Naive thymus-derived CD4-positive, alpha-beta T cell (primary cell): ENCODE measurements at regions of chr2 and their contacts with region 1.

Region 1: GRCh38 chr2:237603718-237604362 is 13.3 kb upstream of the RAB17 start:
- DNase-seq: peak; percentile 39 to 91 (median 84)
- ATAC-seq: peak; percentile 98
- H3K4me3 ChIP-seq: peak overlapping the region; percentile 38
- H3K4me3 Mint-ChIP-seq: peak overlapping the region; percentile 64 to 85 (median 73)
- H3K27ac ChIP-seq: peak overlapping the region; percentile 88
- H3K27ac Mint-ChIP-seq: peak overlapping the region; percentile 93 to 99 (median 97)
- H3K4me1 ChIP-seq: peaks cover 8 to 23% of the 10 kb centered on the region in 2 donors
- H3K4me1 Mint-ChIP-seq: peaks cover 18 to 42% (median 37%) of the 10 kb centered on the region in 7 donors
- H3K27me3 ChIP-seq: no peaks in the 10 kb centered on the region
- H3K27me3 Mint-ChIP-seq: peaks cover 0 to 11% (median 0%) of the 10 kb centered on the region in 5 donors

Region 2: GRCh38 chr2:237627441-237628246 is 23.8 kb after region 1 on chr2 and contains the start of gene LRRFIP1:
- CTCF ChIA-PET with region 1: no interaction called
- POLR2A ChIA-PET with region 1: interaction called, 6 read pairs
- intact Hi-C with region 1: loop called in 1 of 2 experiments (anchors 2 kb)
- DNase-seq: peak in 5 of 9 donors; percentile 15 to 39 (median 23)
- ATAC-seq: peak; percentile 67
- H3K4me3 ChIP-seq: peak within 1 kb of the TSS; percentile 6
- H3K4me3 Mint-ChIP-seq: peak within 1 kb of the TSS; percentile 78 to 94 (median 88)
- H3K27ac ChIP-seq: peak within 1 kb of the TSS; percentile 20
- H3K27ac Mint-ChIP-seq: peak within 1 kb of the TSS in 8 of 9 donors; percentile 56 to 96 (median 86)
- H3K4me1 ChIP-seq: peaks cover 0 to 7% of the 10 kb centered on the region in 2 donors
- H3K4me1 Mint-ChIP-seq: peaks cover 4 to 44% (median 28%) of the 10 kb centered on the region in 7 donors
- H3K27me3 ChIP-seq: no peaks in the 10 kb centered on the region
- H3K27me3 Mint-ChIP-seq: peaks cover 0 to 75% (median 6%) of the 10 kb centered on the region in 5 donors
- total RNA-seq, gene LRRFIP1: 96.3 to 257 (median 114) TPM

Region 3: GRCh38 chr2:237685408-237685807 is 81.6 kb after region 1 on chr2:
- CTCF ChIA-PET with region 1: no interaction called
- POLR2A ChIA-PET with region 1: no interaction called
- intact Hi-C with region 1: loop called in 1 of 2 experiments (anchors 1 kb)
- DNase-seq: no peak
- ATAC-seq: no peak
- H3K4me3 ChIP-seq: no peak overlapping the region
- H3K4me3 Mint-ChIP-seq: no peak overlapping the region
- H3K27ac ChIP-seq: no peak overlapping the region
- H3K27ac Mint-ChIP-seq: peak overlapping the region in 8 of 9 donors; percentile 55 to 100 (median 98)
- H3K4me1 ChIP-seq: peaks cover 29 to 39% of the 10 kb centered on the region in 2 donors
- H3K4me1 Mint-ChIP-seq: peaks cover 28 to 62% (median 49%) of the 10 kb centered on the region in 7 donors
- H3K27me3 ChIP-seq: no peaks in the 10 kb centered on the region
- H3K27me3 Mint-ChIP-seq: no peaks in the 10 kb centered on the region